ENCODE measurements at regions of chr20 and their contacts with region 1.

Region 1: DNA sequence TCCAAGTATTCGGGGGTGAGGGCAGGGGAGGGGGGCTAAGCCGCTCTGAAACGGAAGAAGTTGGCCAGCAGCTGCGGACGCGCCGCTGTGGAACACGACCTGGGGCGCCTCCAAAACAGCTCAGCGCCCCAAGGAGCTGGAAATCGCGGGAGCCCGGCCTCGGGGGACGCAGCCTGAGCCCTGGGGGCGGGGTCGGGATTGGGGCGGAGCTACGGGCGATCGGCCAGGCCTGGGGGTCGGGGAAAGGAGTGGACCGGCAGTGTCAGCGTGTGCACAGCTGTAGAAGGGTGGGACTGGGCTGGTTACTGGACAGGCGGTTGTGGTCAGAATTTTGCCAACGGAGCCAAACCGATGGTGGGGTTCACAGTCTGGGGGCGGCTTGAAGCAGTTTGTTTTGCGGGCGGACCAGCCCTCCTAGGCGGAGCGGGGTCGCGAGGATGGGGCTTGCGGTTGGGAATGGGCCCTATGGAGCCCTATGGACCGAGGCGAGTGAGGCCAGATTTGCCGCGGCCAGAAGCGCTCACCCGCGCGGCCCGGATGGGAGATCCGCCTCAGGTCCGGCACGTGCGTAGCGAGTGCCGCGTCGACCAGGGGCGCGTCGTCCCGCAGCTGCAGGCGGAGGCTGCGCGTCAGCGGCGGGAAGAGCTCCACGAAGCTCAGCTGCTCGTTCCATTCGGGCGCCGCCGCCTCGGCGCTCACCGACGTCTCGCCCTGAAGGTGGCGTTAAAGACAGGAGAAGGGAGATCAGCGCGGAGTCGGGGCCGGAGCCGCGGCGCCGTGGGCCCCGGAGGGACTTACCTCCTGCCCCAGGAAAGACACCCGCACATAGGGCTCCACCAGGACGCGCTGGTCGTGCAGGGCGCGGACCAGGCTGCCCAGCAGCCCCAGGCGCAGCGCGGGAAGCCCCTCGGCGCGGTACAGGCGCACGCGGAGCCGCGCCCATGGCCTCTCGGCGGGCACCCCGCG is 14.3 kb upstream of the SPAG4 start:
- DNase-seq: no peak
- ATAC-seq: peak; percentile 45
- H3K4me3 ChIP-seq: no peak overlapping the region
- H3K27ac ChIP-seq: no peak overlapping the region
- H3K4me1 ChIP-seq: peaks cover 6% of the 10 kb centered on the region
- H3K27me3 ChIP-seq: no peaks in the 10 kb centered on the region
- CTCF ChIP-seq: no peak

Region 2: GRCh38 chr20:35568645-35569262 is 32.5 kb before region 1 on chr20:
- CTCF ChIA-PET with region 1: no interaction called
- POLR2A ChIA-PET with region 1: no interaction called
- intact Hi-C with region 1: loop called (anchors 5 kb)
- DNase-seq: peak; percentile 70
- ATAC-seq: peak; percentile 97
- H3K4me3 ChIP-seq: no peak overlapping the region
- H3K27ac ChIP-seq: no peak overlapping the region
- H3K4me1 ChIP-seq: no peaks in the 10 kb centered on the region
- H3K27me3 ChIP-seq: no peaks in the 10 kb centered on the region
- CTCF ChIP-seq: peak; percentile 69

Region 3: GRCh38 chr20:35629427-35630145 is 28.3 kb after region 1 on chr20:
- CTCF ChIA-PET with region 1: no interaction called
- POLR2A ChIA-PET with region 1: no interaction called
- intact Hi-C with region 1: no loop called
- DNase-seq: no peak
- ATAC-seq: no peak
- H3K4me3 ChIP-seq: no peak overlapping the region
- H3K27ac ChIP-seq: no peak overlapping the region
- H3K4me1 ChIP-seq: peaks cover 13% of the 10 kb centered on the region
- H3K27me3 ChIP-seq: no peaks in the 10 kb centered on the region
- CTCF ChIP-seq: no peak

Measured in PC-3 (cell line).